MCF 10A (cell line): ENCODE measurements at regions of chr11 and their contacts with region 1.

Region 1: DNA sequence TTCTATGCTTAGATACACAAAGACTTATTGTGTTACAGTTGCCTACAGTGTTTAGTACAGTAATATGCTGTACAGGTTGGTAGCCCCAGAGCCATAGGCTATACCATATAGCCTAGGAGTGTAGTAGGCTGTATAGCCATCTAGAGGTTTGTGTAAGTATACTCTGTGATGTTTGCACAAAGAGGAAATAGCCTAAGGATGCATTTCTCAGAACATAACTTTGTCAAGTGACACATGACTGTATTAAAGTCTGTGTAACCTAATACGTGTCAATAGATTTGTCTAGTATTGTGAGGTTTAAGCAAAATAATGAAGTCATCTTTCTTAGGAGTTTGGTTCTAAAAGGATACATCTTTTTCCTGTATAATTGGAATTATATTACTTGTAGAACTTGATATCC is 5.5 kb downstream of the ZC3H12C start:
- DNase-seq: no peak
- H3K4me3 Mint-ChIP-seq: no peak overlapping the region
- H3K27ac Mint-ChIP-seq: peak overlapping the region; percentile 31
- H3K4me1 Mint-ChIP-seq: peaks cover 39% of the 10 kb centered on the region
- H3K27me3 Mint-ChIP-seq: no peaks in the 10 kb centered on the region
- CTCF ChIP-seq: no peak

Region 2: GRCh38 chr11:110086892-110087309 is 11.7 kb before region 1 on chr11:
- CTCF ChIA-PET with region 1: interaction called, 4 read pairs
- POLR2A ChIA-PET with region 1: interaction called, 197 read pairs
- intact Hi-C with region 1: no loop called
- DNase-seq: peak; percentile 86
- H3K4me3 Mint-ChIP-seq: peak overlapping the region; percentile 26
- H3K27ac Mint-ChIP-seq: peak overlapping the region; percentile 92
- H3K4me1 Mint-ChIP-seq: peaks cover 26% of the 10 kb centered on the region
- H3K27me3 Mint-ChIP-seq: no peaks in the 10 kb centered on the region
- CTCF ChIP-seq: no peak

Region 3: DNA sequence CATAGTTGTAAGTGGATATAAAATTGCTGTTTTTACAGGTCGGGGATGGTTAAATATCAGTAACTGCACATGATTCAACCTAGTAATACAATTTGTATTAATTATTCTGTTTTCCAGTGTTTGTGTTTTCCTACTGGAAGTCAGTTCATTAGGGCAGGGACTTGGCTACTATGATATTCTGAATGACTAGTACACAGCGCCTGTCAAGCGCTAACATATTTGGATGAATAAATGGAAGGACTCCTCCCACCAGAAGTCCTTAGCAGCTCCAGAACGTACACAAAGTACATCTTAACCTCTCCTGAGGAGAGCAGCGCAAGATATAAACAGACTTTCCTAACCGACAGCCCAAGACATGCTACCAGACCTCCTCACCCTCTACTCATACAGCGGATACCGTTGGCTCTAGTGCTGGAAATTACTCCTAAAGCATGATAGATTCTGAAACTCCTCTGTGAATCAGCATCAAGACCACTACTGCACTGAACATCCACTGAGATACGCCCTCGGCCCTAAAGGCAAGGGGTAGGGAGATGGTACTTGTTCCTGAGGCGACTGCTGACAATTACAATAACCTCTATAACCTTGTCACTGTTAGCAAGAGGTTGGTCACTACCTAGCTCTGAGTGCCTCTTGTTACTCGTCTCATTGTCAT is 118.7 kb after region 1 on chr11:
- CTCF ChIA-PET with region 1: no interaction called
- POLR2A ChIA-PET with region 1: no interaction called
- intact Hi-C with region 1: no loop called
- DNase-seq: no peak
- H3K4me3 Mint-ChIP-seq: no peak overlapping the region
- H3K27ac Mint-ChIP-seq: no peak overlapping the region
- H3K4me1 Mint-ChIP-seq: peaks cover 10% of the 10 kb centered on the region
- H3K27me3 Mint-ChIP-seq: no peaks in the 10 kb centered on the region
- CTCF ChIP-seq: no peak